PC-3 (cell line): ENCODE measurements at regions of chr15 and their contacts with region 1.

Region 1: GRCh38 chr15:88657326-88658069 is 18.7 kb downstream of the ISG20 start:
- DNase-seq: peak; percentile 73
- ATAC-seq: peak; percentile 28
- H3K4me3 ChIP-seq: no peak overlapping the region
- H3K27ac ChIP-seq: no peak overlapping the region
- H3K4me1 ChIP-seq: peaks cover 27% of the 10 kb centered on the region
- H3K27me3 ChIP-seq: no peaks in the 10 kb centered on the region
- CTCF ChIP-seq: peak; percentile 94

Region 2: GRCh38 chr15:88701561-88702095 is 44.1 kb after region 1 on chr15:
- CTCF ChIA-PET with region 1: no interaction called
- POLR2A ChIA-PET with region 1: no interaction called
- intact Hi-C with region 1: loop called (anchors 1 kb)
- DNase-seq: peak; percentile 47
- ATAC-seq: no peak
- H3K4me3 ChIP-seq: no peak overlapping the region
- H3K27ac ChIP-seq: no peak overlapping the region
- H3K4me1 ChIP-seq: no peaks in the 10 kb centered on the region
- H3K27me3 ChIP-seq: peaks cover 60% of the 10 kb centered on the region
- CTCF ChIP-seq: peak; percentile 65

Region 3: GRCh38 chr15:88834211-88834812 is 176.8 kb after region 1 on chr15:
- CTCF ChIA-PET with region 1: interaction called, 3 read pairs
- POLR2A ChIA-PET with region 1: no interaction called
- intact Hi-C with region 1: loop called (anchors 1 kb)
- DNase-seq: peak; percentile 45
- ATAC-seq: peak; percentile 41
- H3K4me3 ChIP-seq: no peak overlapping the region
- H3K27ac ChIP-seq: no peak overlapping the region
- H3K4me1 ChIP-seq: peaks cover 18% of the 10 kb centered on the region
- H3K27me3 ChIP-seq: no peaks in the 10 kb centered on the region
- CTCF ChIP-seq: peak; percentile 85

Region 4: GRCh38 chr15:88844749-88845386 is 187.4 kb after region 1 on chr15:
- CTCF ChIA-PET with region 1: no interaction called
- POLR2A ChIA-PET with region 1: no interaction called
- intact Hi-C with region 1: no loop called
- DNase-seq: no peak
- ATAC-seq: no peak
- H3K4me3 ChIP-seq: no peak overlapping the region
- H3K27ac ChIP-seq: no peak overlapping the region
- H3K4me1 ChIP-seq: no peaks in the 10 kb centered on the region
- H3K27me3 ChIP-seq: no peaks in the 10 kb centered on the region
- CTCF ChIP-seq: no peak